Vagina (tissue), 2 donors: ENCODE measurements at regions of chr1 and their contacts with region 1.

Region 1: GRCh38 chr1:178607718-178608408 is 95.0 kb downstream of the TEX35 start:
- DNase-seq: no peak
- H3K4me3 ChIP-seq: no peak overlapping the region
- H3K27ac ChIP-seq: no peak overlapping the region
- H3K4me1 ChIP-seq: no peaks in the 10 kb centered on the region
- H3K27me3 ChIP-seq: no peaks in the 10 kb centered on the region
- CTCF ChIP-seq: no peak
- POLR2A ChIP-seq: no peak

Region 2: DNA sequence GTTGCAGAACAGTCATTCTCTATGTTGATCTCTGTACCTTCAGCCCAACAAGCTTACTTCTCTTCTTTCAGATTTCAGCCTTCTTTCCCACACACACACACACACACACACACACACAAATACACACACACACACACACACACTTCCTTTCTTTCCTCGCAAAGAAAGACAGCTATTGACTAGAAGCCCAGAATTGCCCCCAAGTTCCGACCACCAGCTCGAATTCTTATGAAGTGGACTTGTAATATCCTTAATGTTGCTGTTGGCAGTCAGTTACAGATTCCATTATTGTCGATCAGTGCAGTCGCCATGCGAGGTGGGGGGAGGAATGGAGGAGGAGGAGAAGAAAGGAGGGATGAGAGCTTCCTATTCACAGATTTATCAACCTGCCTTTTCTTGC is 236.6 kb before region 1 on chr1:
- intact Hi-C with region 1: no loop called
- DNase-seq: no peak
- H3K4me3 ChIP-seq: peak overlapping the region in 1 of 2 donors; percentile 21
- H3K27ac ChIP-seq: no peak overlapping the region
- H3K4me1 ChIP-seq: peaks cover 9% of the 10 kb centered on the region
- H3K27me3 ChIP-seq: no peaks in the 10 kb centered on the region
- CTCF ChIP-seq: no peak
- POLR2A ChIP-seq: no peak

Region 3: DNA sequence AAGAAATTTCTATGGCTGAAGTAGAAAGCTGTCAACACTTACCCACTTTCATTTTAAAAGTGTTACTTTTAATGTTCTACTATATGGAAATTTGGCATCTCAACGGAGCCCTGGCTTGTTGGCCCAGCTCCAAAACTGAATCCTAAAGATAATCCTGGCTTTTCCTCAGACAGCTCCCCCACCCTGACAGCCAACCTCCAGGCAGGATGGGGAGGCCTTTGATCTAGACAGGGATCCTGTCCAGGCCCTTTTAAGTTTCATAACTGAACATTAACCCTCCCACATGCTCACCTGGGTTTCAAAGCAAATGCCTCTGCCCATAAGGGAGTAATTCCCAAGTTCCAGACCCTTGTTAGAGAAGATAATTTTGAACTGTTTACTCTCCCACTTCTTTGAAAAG is 17.8 kb after region 1 on chr1:
- intact Hi-C with region 1: loop called (anchors 2 kb)
- DNase-seq: no peak
- H3K4me3 ChIP-seq: no peak overlapping the region
- H3K27ac ChIP-seq: no peak overlapping the region
- H3K4me1 ChIP-seq: peaks cover 6% of the 10 kb centered on the region
- H3K27me3 ChIP-seq: no peaks in the 10 kb centered on the region
- CTCF ChIP-seq: no peak
- POLR2A ChIP-seq: no peak

Region 4: GRCh38 chr1:178877896-178878295 is 270.0 kb after region 1 on chr1:
- intact Hi-C with region 1: no loop called
- DNase-seq: no peak
- H3K4me3 ChIP-seq: no peak overlapping the region
- H3K27ac ChIP-seq: no peak overlapping the region
- H3K4me1 ChIP-seq: no peaks in the 10 kb centered on the region
- H3K27me3 ChIP-seq: no peaks in the 10 kb centered on the region
- CTCF ChIP-seq: no peak
- POLR2A ChIP-seq: no peak